GM12878 (cell line): ENCODE measurements at regions of chr1 and their contacts with region 1.

Region 1: GRCh38 chr1:12407050-12407961 is 177.5 kb downstream of the VPS13D start:
- DNase-seq: peak; percentile 9
- ATAC-seq: 0 out of 3 replicates have a peak, but pooled peaks have one; percentile 42
- H3K4me3 ChIP-seq: no peak overlapping the region
- H3K27ac ChIP-seq: no peak overlapping the region
- H3K4me1 ChIP-seq: no peaks in the 10 kb centered on the region
- H3K27me3 ChIP-seq: no peaks in the 10 kb centered on the region
- CTCF ChIP-seq: peak in 1 of 3 experiments; percentile 28; a peak in 2 of 6 replicates
- EP300 ChIP-seq: no peak
- POLR2A ChIP-seq: no peak
- RAD21 ChIP-seq: peak; percentile 48

Region 2: DNA sequence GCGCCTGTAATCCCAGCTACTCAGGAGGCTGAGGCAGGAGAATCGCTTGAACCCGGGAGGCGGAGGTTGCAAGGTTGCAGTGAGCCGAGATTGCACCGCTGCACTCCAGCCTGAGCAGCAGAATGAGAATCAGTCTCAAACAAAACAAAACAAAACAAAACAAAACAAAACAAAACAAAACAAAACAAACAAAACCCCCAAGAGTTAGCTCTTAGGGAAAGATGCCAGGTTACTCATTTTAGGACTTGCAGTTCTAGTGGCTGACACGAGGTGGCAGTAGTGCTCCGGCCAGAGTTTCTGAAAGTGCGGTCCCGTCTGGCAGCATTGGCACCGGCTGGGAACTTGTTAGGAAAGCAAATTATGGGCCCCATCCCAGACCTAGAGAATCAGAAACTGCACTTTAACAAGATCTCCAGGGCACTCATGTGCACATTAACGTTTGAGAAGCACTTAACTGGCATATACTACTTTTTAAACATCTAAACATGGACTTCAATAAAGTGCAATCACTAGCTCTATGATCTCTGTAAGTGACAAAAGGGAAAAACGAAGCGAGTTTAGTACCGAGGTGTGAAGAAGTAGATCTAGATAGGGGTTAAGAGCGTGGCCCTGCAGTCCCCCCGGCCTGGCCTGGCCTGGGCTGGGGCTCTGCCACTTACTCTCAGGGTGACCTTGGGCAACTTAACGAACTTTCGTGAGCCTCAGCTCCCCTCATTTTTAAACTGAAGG is 282.4 kb before region 1 on chr1:
- CTCF ChIA-PET with region 1: no interaction called
- POLR2A ChIA-PET with region 1: no interaction called
- RAD21 ChIA-PET with region 1: no interaction called
- SMC1A ChIA-PET with region 1: no interaction called
- in situ Hi-C with region 1: no loop called
- intact Hi-C with region 1: no loop called
- DNase-seq: no peak
- ATAC-seq: peak; percentile 67
- H3K4me3 ChIP-seq: no peak overlapping the region
- H3K27ac ChIP-seq: no peak overlapping the region
- H3K4me1 ChIP-seq: no peaks in the 10 kb centered on the region
- H3K27me3 ChIP-seq: no peaks in the 10 kb centered on the region
- CTCF ChIP-seq: peak; percentile 89 to 95 (median 89)
- EP300 ChIP-seq: no peak
- POLR2A ChIP-seq: no peak
- RAD21 ChIP-seq: peak; percentile 94

Region 3: DNA sequence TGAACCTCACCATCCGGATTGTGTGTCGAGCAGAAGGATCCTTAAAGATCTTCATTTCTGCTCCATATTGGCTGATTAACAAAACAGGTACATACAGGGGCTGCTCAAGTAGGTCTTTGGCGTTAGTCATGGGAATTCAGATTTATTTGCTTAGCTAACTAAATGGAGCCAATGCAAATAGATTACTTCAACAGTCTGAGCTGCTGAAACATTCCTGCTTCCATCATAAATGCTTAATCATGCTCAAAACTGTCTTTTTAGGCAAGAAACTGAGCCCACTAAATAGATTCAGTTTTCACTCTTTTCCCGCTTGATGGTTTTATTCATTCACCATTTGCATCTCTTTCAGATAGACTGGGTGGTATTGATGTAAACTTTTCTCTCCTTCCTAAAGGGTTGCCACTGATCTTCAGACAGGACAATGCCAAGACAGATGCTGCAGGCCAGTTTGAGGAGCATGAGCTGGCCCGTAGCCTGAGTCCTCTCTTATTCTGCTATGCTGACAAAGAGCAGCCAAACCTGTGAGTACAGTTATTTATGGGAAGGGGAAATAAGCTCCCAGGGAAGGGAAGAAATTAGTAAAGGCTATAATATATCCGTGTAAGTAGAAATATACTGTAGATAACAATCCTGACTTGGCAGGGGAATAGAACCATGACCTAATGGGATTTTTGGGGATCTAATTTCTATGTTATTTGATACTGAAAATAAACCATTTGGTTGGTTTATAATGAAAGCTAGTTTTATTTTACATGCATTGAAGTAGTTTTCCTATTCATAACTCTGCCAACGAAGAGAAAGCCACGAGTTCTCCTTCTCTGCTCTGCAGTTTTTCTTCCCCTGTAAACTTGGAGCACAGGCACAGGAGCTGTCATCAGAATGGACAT is 51.1 kb before region 1 on chr1:
- CTCF ChIA-PET with region 1: no interaction called
- POLR2A ChIA-PET with region 1: no interaction called
- RAD21 ChIA-PET with region 1: no interaction called
- SMC1A ChIA-PET with region 1: no interaction called
- in situ Hi-C with region 1: no loop called
- intact Hi-C with region 1: no loop called
- DNase-seq: no peak
- ATAC-seq: no peak
- H3K4me3 ChIP-seq: no peak overlapping the region
- H3K27ac ChIP-seq: no peak overlapping the region
- H3K4me1 ChIP-seq: no peaks in the 10 kb centered on the region
- H3K27me3 ChIP-seq: no peaks in the 10 kb centered on the region
- CTCF ChIP-seq: no peak
- EP300 ChIP-seq: no peak
- POLR2A ChIP-seq: no peak
- RAD21 ChIP-seq: no peak

Region 4: GRCh38 chr1:12424087-12424529 is 16.8 kb after region 1 on chr1:
- CTCF ChIA-PET with region 1: interaction called, 8 read pairs
- POLR2A ChIA-PET with region 1: interaction called, 4 read pairs
- RAD21 ChIA-PET with region 1: no interaction called
- SMC1A ChIA-PET with region 1: interaction called, 12 read pairs
- in situ Hi-C with region 1: no loop called
- intact Hi-C with region 1: no loop called
- DNase-seq: no peak
- ATAC-seq: no peak
- H3K4me3 ChIP-seq: no peak overlapping the region
- H3K27ac ChIP-seq: no peak overlapping the region
- H3K4me1 ChIP-seq: no peaks in the 10 kb centered on the region
- H3K27me3 ChIP-seq: no peaks in the 10 kb centered on the region
- CTCF ChIP-seq: no peak
- EP300 ChIP-seq: no peak
- POLR2A ChIP-seq: no peak
- RAD21 ChIP-seq: no peak